Natural killer cell (primary cell): ENCODE measurements at regions of chr7 and their contacts with region 1.

Region 1: DNA sequence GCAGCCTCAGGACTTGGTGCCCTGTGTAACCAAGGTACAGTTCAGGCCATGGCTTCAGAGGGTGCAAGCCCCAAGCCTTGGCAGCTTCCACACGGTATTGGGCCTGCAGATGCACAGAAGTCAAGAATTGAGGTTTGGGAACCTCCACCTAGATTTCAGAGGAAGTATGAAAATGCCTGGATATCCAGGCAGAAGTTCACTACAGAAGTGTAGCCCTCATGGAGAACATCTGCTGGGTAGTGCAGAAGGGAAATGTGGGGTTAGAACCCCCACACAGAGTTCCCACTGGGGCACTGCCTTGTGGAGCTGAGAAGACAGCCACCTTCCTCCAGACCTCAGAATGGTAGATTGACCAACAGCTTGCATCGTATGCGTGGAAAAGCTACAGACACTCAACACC is 3.4 kb upstream of the SEM1 start:
- DNase-seq: no peak
- ATAC-seq: no peak
- H3K4me3 ChIP-seq: no peak overlapping the region
- H3K4me3 Mint-ChIP-seq: no peak overlapping the region
- H3K27ac ChIP-seq: no peak overlapping the region
- H3K27ac Mint-ChIP-seq: no peak overlapping the region
- H3K4me1 ChIP-seq: peaks cover 3% of the 10 kb centered on the region
- H3K4me1 Mint-ChIP-seq: peaks cover 13 to 22% of the 10 kb centered on the region in 2 donors
- H3K27me3 ChIP-seq: peaks cover 14% of the 10 kb centered on the region
- H3K27me3 Mint-ChIP-seq: peaks cover 24 to 37% of the 10 kb centered on the region in 2 donors
- CTCF ChIP-seq: no peak

Region 2: DNA sequence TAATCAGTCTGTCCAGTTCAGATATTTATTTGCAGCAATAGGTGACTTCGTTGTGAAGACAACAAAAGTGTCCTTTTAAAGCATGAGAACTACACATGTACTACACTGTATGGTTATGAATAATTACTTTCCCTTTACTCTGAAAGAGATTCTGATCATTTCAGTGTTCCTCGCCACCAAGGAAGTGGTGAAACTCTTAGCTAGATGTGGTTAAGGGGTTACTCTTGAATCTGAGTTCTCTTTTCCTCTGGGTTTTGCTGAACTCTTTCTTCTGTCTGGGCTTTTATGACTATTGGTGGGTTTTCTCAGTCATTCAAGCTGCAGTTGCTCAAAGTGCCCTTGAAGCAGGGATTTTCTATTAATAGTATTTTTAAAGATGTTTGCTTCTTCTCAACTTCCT is 124.6 kb after region 1 on chr7:
- intact Hi-C with region 1: loop called (anchors 2 kb)
- DNase-seq: peak in 1 of 2 donors; percentile 68
- ATAC-seq: peak; percentile 84 to 94 (median 88)
- H3K4me3 ChIP-seq: no peak overlapping the region
- H3K4me3 Mint-ChIP-seq: peak overlapping the region; percentile 91
- H3K27ac ChIP-seq: no peak overlapping the region
- H3K27ac Mint-ChIP-seq: peak overlapping the region; percentile 74 to 79
- H3K4me1 ChIP-seq: peaks cover 12% of the 10 kb centered on the region
- H3K4me1 Mint-ChIP-seq: peaks cover 43 to 47% of the 10 kb centered on the region in 2 donors
- H3K27me3 ChIP-seq: peaks cover 13% of the 10 kb centered on the region
- H3K27me3 Mint-ChIP-seq: peaks cover 9 to 27% of the 10 kb centered on the region in 2 donors
- CTCF ChIP-seq: no peak

Region 3: GRCh38 chr7:97064967-97065587 is 352.0 kb after region 1 on chr7:
- intact Hi-C with region 1: no loop called
- DNase-seq: peak in 1 of 2 donors; percentile 72
- ATAC-seq: peak; percentile 44 to 81 (median 74)
- H3K4me3 ChIP-seq: no peak overlapping the region
- H3K4me3 Mint-ChIP-seq: no peak overlapping the region
- H3K27ac ChIP-seq: no peak overlapping the region
- H3K27ac Mint-ChIP-seq: no peak overlapping the region
- H3K4me1 ChIP-seq: no peaks in the 10 kb centered on the region
- H3K4me1 Mint-ChIP-seq: no peaks in the 10 kb centered on the region
- H3K27me3 ChIP-seq: no peaks in the 10 kb centered on the region
- H3K27me3 Mint-ChIP-seq: peaks cover 6 to 8% of the 10 kb centered on the region in 2 donors
- CTCF ChIP-seq: peak; percentile 64